Lower leg skin (tissue), 4 donors: ENCODE measurements at regions of chr12 and their contacts with region 1.

Region 1: DNA sequence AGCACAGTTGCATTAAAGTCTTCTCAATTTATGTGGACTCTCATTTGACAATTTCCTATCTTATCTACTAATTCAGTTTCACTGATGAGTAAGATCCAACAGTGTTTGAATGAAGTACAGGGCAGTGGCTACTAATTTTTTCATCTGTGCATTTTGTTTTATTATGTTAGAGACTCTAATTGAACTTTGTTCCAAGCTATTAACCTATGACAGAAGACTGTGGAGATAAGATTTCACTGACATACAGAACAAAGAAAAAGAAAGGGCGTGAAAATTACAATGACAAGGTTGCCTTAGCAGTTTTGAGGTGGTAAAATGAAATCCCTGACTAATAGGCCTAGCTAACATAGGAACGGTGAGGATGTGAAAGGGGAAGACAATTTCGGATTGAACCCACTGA is 153.2 kb upstream of the SOX5 start:
- DNase-seq: no peak
- H3K4me3 ChIP-seq: no peak overlapping the region
- CTCF ChIP-seq: no peak
- POLR2A ChIP-seq: no peak

Region 2: GRCh38 chr12:24127919-24128721 is 25.4 kb after region 1 on chr12:
- intact Hi-C with region 1: loop called (anchors 2 kb)
- DNase-seq: no peak
- H3K4me3 ChIP-seq: no peak overlapping the region
- CTCF ChIP-seq: no peak
- POLR2A ChIP-seq: no peak

Region 3: DNA sequence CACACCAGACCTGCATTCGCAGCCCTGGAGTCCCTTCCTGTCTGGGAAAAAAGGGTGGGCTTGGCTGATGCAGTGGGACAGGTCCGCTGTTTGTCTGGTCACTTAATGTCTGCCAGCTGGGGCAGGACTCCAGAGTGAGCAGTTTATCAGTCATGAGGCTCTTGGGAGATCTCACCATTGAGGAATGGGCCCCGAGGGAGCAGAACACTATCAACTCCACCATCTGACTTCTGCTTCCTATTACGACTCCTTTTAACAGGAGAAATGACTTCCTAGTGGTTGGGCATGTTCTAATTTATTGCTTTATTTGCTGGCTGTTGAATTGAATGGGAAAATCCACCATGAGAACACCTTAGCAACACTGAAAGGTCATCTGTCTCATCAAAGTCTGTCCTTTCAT is 1673.3 kb after region 1 on chr12:
- intact Hi-C with region 1: no loop called
- DNase-seq: no peak
- H3K4me3 ChIP-seq: no peak overlapping the region
- CTCF ChIP-seq: no peak
- POLR2A ChIP-seq: no peak